ENCODE measurements at regions of chr1 and their contacts with region 1.

Region 1: GRCh38 chr1:75707191-75707590 is 17.3 kb upstream of the ACADM start:
- DNase-seq: no peak
- ATAC-seq: no peak
- H3K4me3 ChIP-seq: no peak overlapping the region
- H3K27ac ChIP-seq: no peak overlapping the region
- H3K4me1 ChIP-seq: no peaks in the 10 kb centered on the region
- H3K27me3 ChIP-seq: no peaks in the 10 kb centered on the region
- CTCF ChIP-seq: no peak
- POLR2A ChIP-seq: no peak
- RAD21 ChIP-seq: no peak

Region 2: GRCh38 chr1:75668813-75669212 is 38.4 kb before region 1 on chr1:
- CTCF ChIA-PET with region 1: no interaction called
- POLR2A ChIA-PET with region 1: no interaction called
- dilution Hi-C with region 1: no loop called
- in situ Hi-C with region 1: no loop called
- intact Hi-C with region 1: loop called (anchors 2 kb)
- DNase-seq: no peak
- ATAC-seq: no peak
- H3K4me3 ChIP-seq: no peak overlapping the region
- H3K27ac ChIP-seq: no peak overlapping the region
- H3K4me1 ChIP-seq: peaks cover 6% of the 10 kb centered on the region
- H3K27me3 ChIP-seq: no peaks in the 10 kb centered on the region
- CTCF ChIP-seq: no peak
- POLR2A ChIP-seq: no peak
- RAD21 ChIP-seq: no peak

Measured in IMR-90 (cell line).